Heart right ventricle (tissue), 16 donors: ENCODE measurements at regions of chr20 and their contacts with region 1.

Region 1: DNA sequence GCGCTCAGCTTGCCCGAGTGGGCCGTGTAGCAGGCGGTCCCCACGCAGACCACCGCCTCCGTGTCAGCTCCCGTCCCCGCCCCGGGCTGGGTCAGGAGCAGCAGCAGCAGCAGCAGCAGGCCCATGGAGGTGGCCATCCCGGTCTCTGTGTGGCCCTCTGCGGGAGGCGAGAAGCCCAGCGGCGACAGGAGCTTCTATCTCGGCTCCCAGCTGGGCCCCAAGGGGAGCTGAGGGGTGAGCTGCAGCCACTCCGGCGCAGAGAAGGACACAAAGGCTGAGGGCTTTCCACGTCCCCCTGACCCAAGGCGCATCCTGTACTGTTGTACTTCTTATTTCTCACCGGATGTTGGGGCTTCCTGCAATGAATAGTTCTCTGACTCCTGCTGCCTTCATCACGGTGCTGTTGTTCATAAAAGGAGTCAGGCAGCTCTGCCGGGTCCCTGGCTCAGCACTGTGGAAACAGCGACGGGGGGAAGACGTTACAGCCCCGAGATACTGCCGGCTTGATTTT is at the start of gene CD93:
- DNase-seq: peak; percentile 58 to 78
- ATAC-seq: peak; percentile 68 to 82 (median 77)
- H3K4me3 ChIP-seq: peak within 1 kb of the TSS; percentile 47 to 73 (median 58)
- H3K27ac ChIP-seq: peak within 1 kb of the TSS; percentile 91 to 99 (median 97)
- H3K4me1 ChIP-seq: peaks cover 0 to 49% (median 36%) of the 10 kb centered on the region in 9 donors
- H3K27me3 ChIP-seq: no peaks in the 10 kb centered on the region
- CTCF ChIP-seq: no peak
- total RNA-seq, gene CD93: 29.6 to 85.0 (median 40.0) TPM

Region 2: GRCh38 chr20:23103284-23104035 is 17.3 kb after region 1 on chr20:
- intact Hi-C with region 1: loop called in 1 of 10 experiments (anchors 1 kb)
- DNase-seq: no peak
- ATAC-seq: peak in 7 of 8 donors; percentile 28 to 74 (median 57)
- H3K4me3 ChIP-seq: no peak overlapping the region
- H3K27ac ChIP-seq: peak overlapping the region; percentile 61 to 90 (median 82)
- H3K4me1 ChIP-seq: peaks cover 0 to 69% (median 46%) of the 10 kb centered on the region in 9 donors
- H3K27me3 ChIP-seq: no peaks in the 10 kb centered on the region
- CTCF ChIP-seq: no peak

Region 3: DNA sequence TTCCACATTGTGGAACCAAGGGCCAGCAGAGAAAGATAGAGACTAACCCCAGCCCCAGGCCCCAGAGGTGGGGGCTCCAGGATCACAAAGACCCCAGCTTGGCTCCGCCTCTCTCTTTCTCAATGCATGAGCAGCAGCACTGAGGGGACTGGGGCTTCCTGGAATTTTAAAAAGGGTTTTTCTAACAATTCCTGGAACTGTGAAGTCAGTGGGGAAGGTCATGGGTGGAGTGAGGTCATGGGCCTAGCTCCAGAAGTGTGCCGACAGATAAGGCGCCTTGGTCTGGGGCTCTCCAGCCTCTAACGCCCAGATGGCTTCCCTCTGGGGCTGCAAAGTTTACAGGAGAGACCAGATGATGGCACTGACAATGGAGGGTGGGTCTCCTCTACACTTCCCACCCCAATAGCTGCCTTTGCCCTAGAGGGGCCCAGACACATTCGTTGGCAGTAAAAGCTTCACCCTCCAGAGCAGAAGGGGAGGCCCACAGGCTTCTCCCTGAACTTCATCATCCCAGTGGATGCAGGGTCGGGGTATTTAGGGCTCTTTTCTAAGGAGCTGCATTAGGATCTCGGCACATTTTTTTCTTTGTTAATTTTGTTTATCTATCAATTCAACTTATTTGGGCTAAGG is 46.9 kb after region 1 on chr20:
- intact Hi-C with region 1: loop called in 3 of 10 experiments (anchors 5 kb)
- DNase-seq: peak; percentile 65 to 80
- ATAC-seq: peak; percentile 72 to 94 (median 84)
- H3K4me3 ChIP-seq: no peak overlapping the region
- H3K27ac ChIP-seq: peak overlapping the region; percentile 9 to 88 (median 76)
- H3K4me1 ChIP-seq: peaks cover 2 to 79% (median 52%) of the 10 kb centered on the region in 9 donors
- H3K27me3 ChIP-seq: no peaks in the 10 kb centered on the region
- CTCF ChIP-seq: no peak

Region 4: GRCh38 chr20:23143098-23143497 is 57.0 kb after region 1 on chr20:
- intact Hi-C with region 1: loop called in 1 of 10 experiments (anchors 5 kb)
- DNase-seq: peak in 1 of 2 donors; percentile 82
- ATAC-seq: peak; percentile 87 to 97 (median 92)
- H3K4me3 ChIP-seq: no peak overlapping the region
- H3K27ac ChIP-seq: peak overlapping the region in 9 of 10 donors; percentile 57 to 95 (median 76)
- H3K4me1 ChIP-seq: peaks cover 10 to 72% (median 34%) of the 10 kb centered on the region in 9 donors
- H3K27me3 ChIP-seq: no peaks in the 10 kb centered on the region
- CTCF ChIP-seq: peak in 1 of 9 donors; percentile 11

Region 5: DNA sequence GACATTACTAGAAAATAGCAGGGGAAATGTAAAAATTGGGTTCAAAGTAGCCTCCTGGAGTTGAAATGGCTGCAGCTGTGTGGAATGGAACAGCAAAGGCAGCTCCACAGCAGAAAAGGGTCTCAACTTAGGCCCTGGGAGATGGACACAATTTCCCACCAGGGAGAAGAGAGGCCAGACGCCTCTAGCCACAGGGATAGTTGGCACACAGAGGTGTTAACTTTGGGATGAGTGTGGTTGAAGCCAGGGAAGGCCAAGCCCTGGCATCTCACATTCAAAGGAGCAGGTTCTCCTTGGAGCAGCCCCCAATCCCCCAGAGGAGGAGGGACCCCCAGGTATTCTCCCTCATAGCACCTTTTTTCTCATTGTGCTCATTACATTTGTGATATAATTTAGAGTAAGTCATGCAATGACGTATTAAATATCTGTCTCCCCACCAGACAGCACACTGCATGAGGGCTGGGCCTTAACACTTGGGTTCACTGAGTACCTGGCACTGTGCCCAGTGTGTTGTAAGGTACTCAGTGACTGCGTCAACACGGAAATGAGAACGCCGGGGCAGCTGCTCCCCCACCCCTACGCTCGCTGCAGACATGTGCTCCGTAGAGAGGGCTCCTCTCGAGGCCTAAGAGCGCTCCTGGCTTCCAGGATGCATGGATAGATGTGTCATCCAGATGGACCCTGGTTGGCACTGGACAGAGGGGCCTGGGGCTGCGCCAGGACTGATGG is 76.0 kb after region 1 on chr20:
- intact Hi-C with region 1: loop called in 1 of 10 experiments (anchors 5 kb)
- DNase-seq: peak; percentile 72 to 80
- ATAC-seq: peak; percentile 46 to 92 (median 85)
- H3K4me3 ChIP-seq: no peak overlapping the region
- H3K27ac ChIP-seq: peak overlapping the region; percentile 24 to 87 (median 68)
- H3K4me1 ChIP-seq: peaks cover 8 to 70% (median 60%) of the 10 kb centered on the region in 9 donors
- H3K27me3 ChIP-seq: no peaks in the 10 kb centered on the region
- CTCF ChIP-seq: no peak

Region 6: DNA sequence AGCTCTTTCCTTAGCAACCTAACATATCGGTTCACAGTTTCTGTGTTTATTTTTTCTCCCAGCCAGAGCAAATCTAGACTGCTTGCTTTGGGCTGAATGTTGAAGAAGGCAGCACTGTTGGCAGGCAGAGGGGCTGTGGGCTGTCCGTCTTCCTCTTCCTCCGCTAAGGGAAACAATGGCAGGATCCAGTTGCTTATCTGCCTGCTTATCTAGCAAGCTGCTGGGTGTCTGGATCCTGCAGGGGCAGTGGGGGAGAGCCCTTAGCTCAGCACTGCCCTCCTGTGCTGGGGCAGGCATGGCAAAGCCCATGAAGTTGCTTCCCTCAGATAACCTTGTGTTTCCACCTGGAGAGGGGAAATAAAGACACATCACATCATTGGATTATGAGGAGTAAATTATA is 92.7 kb after region 1 on chr20:
- intact Hi-C with region 1: loop called in 1 of 10 experiments (anchors 5 kb)
- DNase-seq: peak; percentile 41 to 65
- ATAC-seq: peak; percentile 45 to 83 (median 74)
- H3K4me3 ChIP-seq: no peak overlapping the region
- H3K27ac ChIP-seq: peak overlapping the region in 8 of 10 donors; percentile 32 to 83 (median 76)
- H3K4me1 ChIP-seq: peaks cover 0 to 50% (median 18%) of the 10 kb centered on the region in 9 donors
- H3K27me3 ChIP-seq: no peaks in the 10 kb centered on the region
- CTCF ChIP-seq: peak in 8 of 9 donors; percentile 44 to 66 (median 52)

Region 7: DNA sequence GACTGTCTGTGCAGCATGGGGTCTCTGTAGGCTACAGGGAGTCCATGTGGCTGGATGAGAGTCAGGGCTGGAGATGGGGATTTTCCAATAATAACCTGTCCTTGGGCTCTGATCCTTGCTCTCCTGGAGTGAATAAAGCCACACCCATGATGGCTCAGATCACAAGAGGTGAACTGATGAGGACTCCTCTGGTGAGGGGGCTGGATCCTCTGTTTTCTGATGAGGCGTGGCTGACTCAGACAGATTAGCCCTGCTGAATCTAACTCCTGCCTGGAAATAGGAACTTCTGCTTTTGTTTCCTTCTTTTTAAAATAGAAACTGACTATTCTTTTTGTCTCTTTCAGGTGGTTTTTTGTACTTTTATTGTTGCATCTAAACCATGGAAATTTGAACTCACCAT is 455.2 kb after region 1 on chr20:
- intact Hi-C with region 1: no loop called
- DNase-seq: no peak
- ATAC-seq: no peak
- H3K4me3 ChIP-seq: no peak overlapping the region
- H3K27ac ChIP-seq: no peak overlapping the region
- H3K4me1 ChIP-seq: peaks cover 0 to 10% (median 0%) of the 10 kb centered on the region in 9 donors
- H3K27me3 ChIP-seq: peaks cover 0 to 19% (median 3%) of the 10 kb centered on the region in 7 donors
- CTCF ChIP-seq: no peak